ENCODE measurements at regions of chr14 and their contacts with region 1.

Region 1: GRCh38 chr14:49879683-49880204 is 13.1 kb upstream of the ARF6 start:
- H3K4me3 ChIP-seq: no peak overlapping the region
- H3K27ac ChIP-seq: peak overlapping the region; percentile 74; the same call in 1 of the 2 replicates
- H3K4me1 ChIP-seq: peaks cover 13% of the 10 kb centered on the region
- CTCF ChIP-seq: peak; percentile 40; the same call in 1 of the 2 replicates

Region 2: GRCh38 chr14:49828640-49829039 is 51.1 kb before region 1 on chr14:
- CTCF ChIA-PET with region 1: no interaction called
- POLR2A ChIA-PET with region 1: no interaction called
- H3K4me3 ChIP-seq: no peak overlapping the region
- H3K27ac ChIP-seq: no peak overlapping the region
- H3K4me1 ChIP-seq: no peaks in the 10 kb centered on the region
- CTCF ChIP-seq: no peak

Region 3: GRCh38 chr14:49867831-49868723 is 11.7 kb before region 1 on chr14:
- CTCF ChIA-PET with region 1: interaction called, 19 read pairs
- POLR2A ChIA-PET with region 1: interaction called, 14 read pairs
- H3K4me3 ChIP-seq: peak overlapping the region; percentile 64
- H3K27ac ChIP-seq: peak overlapping the region; percentile 75
- H3K4me1 ChIP-seq: peaks cover 7% of the 10 kb centered on the region; the same call in 1 of the 2 replicates
- CTCF ChIP-seq: no peak

Region 4: GRCh38 chr14:49940808-49941421 is 61.2 kb after region 1 on chr14:
- CTCF ChIA-PET with region 1: no interaction called
- POLR2A ChIA-PET with region 1: no interaction called
- H3K4me3 ChIP-seq: no peak overlapping the region
- H3K27ac ChIP-seq: no peak overlapping the region
- H3K4me1 ChIP-seq: no peaks in the 10 kb centered on the region; the same call in 1 of the 2 replicates
- CTCF ChIP-seq: no peak

Measured in HEK293 (cell line).